K562 (cell line): ENCODE measurements at regions of chr5 and their contacts with region 1.

Region 1: DNA sequence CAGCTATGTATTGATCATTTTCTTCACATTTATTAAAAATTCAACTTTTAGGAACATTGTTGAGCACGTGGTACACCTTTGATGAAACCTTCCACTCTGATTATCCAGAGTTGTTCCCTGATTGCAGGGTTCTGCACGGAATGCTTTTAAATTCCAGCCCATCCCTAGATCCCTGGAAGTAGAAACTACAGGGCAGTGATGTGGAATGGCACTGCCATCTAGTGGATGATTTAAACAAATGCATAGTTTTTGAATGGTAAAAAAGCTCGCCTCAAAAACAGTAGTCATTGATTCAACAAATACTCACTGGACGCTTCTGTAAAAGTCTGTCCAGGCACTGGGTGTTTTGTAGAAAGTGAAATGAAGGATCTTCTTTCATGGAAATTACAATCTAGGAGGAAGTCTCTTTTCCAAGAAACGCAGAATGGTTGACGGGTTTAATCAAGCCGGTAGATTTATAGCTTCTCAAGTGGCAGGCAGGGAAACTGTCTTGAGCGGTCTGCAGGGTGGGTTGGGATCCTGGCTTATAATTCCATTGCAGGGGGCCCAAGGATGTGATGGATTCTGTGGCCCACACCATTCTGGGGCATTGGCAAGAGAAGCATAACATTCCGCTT is 118.4 kb downstream of the ARHGAP26 start:
- DNase-seq: peak; percentile 43 to 52 (median 47)
- ATAC-seq: peak; percentile 81
- H3K4me3 ChIP-seq: no peak overlapping the region
- H3K27ac ChIP-seq: no peak overlapping the region
- H3K4me1 ChIP-seq: no peaks in the 10 kb centered on the region
- H3K27me3 ChIP-seq: peaks cover 3 to 4% of the 10 kb centered on the region in 2 experiments; a peak in 1 of 5 replicates
- CTCF ChIP-seq: peak; percentile 51 to 77 (median 73)
- EP300 ChIP-seq: no peak
- POLR2A ChIP-seq: no peak
- RAD21 ChIP-seq: peak; percentile 82 to 85

Region 2: GRCh38 chr5:141960449-141961202 is 928.0 kb before region 1 on chr5:
- CTCF ChIA-PET with region 1: no interaction called
- POLR2A ChIA-PET with region 1: no interaction called
- in situ Hi-C with region 1: no loop called
- intact Hi-C with region 1: no loop called
- DNase-seq: peak; percentile 83 to 95 (median 86)
- ATAC-seq: peak; percentile 94
- H3K4me3 ChIP-seq: no peak overlapping the region
- H3K27ac ChIP-seq: peak overlapping the region; percentile 55
- H3K4me1 ChIP-seq: peaks cover 3 to 16% of the 10 kb centered on the region in 2 experiments
- H3K27me3 ChIP-seq: peaks cover 3 to 21% of the 10 kb centered on the region in 2 experiments; a peak in 3 of 5 replicates
- CTCF ChIP-seq: peak; percentile 90 to 95 (median 94)
- EP300 ChIP-seq: no peak
- POLR2A ChIP-seq: no peak
- RAD21 ChIP-seq: peak; percentile 86 to 91

Region 3: GRCh38 chr5:142151436-142152383 is 736.9 kb before region 1 on chr5:
- CTCF ChIA-PET with region 1: no interaction called
- POLR2A ChIA-PET with region 1: no interaction called
- in situ Hi-C with region 1: no loop called
- intact Hi-C with region 1: loop called (anchors 10 kb)
- DNase-seq: peak; percentile 50 to 76 (median 60)
- ATAC-seq: peak; percentile 85
- H3K4me3 ChIP-seq: no peak overlapping the region
- H3K27ac ChIP-seq: no peak overlapping the region
- H3K4me1 ChIP-seq: no peaks in the 10 kb centered on the region
- H3K27me3 ChIP-seq: no peaks in the 10 kb centered on the region
- CTCF ChIP-seq: peak; percentile 63 to 93 (median 66); a peak in 5 of 6 replicates
- EP300 ChIP-seq: no peak
- POLR2A ChIP-seq: no peak
- RAD21 ChIP-seq: peak; percentile 92 to 93

Region 4: DNA sequence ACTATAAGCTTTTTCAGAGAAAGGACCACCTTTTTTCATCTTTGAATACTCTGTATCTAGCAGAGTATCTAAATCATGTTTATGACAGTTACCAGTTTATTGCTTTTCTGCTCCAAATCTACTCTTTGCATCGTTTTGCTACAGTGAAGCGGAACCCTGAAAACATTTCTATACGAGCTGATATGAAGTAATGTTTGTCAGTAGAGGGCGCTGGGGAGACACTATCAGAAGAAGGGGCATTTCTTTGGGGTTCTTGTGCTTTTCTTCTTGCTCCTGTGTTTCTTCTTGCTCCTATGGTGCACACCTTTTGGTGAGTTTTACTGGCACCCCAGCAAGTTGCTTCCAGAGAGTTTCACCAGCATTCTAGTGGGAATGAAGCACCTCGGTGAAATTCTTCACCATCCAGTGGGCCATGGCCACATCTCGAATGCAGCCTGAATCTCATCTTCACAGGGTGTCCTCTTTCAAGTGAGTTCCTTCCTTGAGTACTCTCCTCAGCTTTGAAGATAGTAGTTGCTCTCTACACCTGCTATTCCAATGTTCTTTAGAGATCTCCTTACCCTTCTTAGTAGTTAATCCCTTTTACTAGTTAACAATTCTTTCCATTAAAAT is 301.1 kb before region 1 on chr5:
- CTCF ChIA-PET with region 1: no interaction called
- POLR2A ChIA-PET with region 1: no interaction called
- in situ Hi-C with region 1: no loop called
- intact Hi-C with region 1: loop called (anchors 10 kb)
- DNase-seq: peak; percentile 22 to 68 (median 30)
- ATAC-seq: peak; percentile 70
- H3K4me3 ChIP-seq: no peak overlapping the region
- H3K27ac ChIP-seq: no peak overlapping the region
- H3K4me1 ChIP-seq: no peaks in the 10 kb centered on the region
- H3K27me3 ChIP-seq: peaks cover 0 to 10% of the 10 kb centered on the region in 2 experiments; a peak in 1 of 5 replicates
- CTCF ChIP-seq: peak; percentile 63 to 72 (median 67)
- EP300 ChIP-seq: no peak
- POLR2A ChIP-seq: no peak
- RAD21 ChIP-seq: peak; percentile 51 to 62; a peak in 3 of 4 replicates

Region 5: DNA sequence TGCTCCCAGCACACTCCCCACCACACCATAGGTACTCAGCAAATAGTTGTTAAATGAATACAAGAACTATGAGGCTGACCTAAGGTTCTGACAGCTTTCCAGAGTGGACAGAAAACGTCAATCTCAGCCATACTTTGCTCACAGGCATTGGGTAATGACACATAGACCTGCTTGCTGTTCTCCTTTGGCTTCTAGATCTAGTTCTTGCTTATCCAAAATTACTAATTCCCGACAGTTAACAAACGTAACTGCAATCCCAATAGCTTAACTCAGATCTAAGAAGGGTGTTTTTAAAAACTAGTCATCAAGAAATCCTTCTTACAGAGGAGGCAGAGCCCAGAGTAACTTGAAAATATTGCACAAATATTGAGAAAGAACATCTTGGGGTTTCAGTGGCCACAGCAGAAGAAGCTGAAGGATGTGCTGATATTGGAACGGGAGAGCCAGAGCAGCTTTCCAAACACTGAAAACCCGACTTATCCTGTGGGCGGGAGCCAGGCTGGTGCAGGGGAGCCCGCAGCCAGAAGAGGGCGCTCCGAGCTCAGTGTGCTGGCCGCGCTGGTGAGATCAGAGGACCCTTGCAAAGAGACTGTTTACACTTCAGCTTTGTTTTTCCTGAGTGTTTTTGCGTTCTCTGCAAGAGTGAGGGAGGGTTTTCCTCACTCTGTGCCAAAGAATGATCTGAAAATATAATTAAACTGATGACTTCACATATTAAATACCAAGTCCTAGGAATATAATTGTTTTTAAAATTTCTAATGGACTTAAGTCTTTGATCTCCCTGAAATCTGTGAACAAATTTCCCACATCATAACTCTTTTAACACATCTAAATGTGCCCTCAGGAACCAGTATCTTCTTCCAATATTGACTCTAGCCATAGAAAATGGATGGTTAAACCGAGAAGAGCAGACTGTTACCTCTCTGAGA is 233.0 kb before region 1 on chr5:
- CTCF ChIA-PET with region 1: no interaction called
- POLR2A ChIA-PET with region 1: no interaction called
- in situ Hi-C with region 1: no loop called
- intact Hi-C with region 1: loop called (anchors 1 kb)
- DNase-seq: peak; percentile 74 to 85 (median 82)
- ATAC-seq: peak; percentile 99
- H3K4me3 ChIP-seq: no peak overlapping the region
- H3K27ac ChIP-seq: no peak overlapping the region
- H3K4me1 ChIP-seq: no peaks in the 10 kb centered on the region
- H3K27me3 ChIP-seq: peaks cover 14 to 48% of the 10 kb centered on the region in 2 experiments; a peak in 4 of 5 replicates
- CTCF ChIP-seq: peak; percentile 93 to 95 (median 94)
- EP300 ChIP-seq: no peak
- POLR2A ChIP-seq: no peak
- RAD21 ChIP-seq: peak; percentile 90 to 91

Region 6: GRCh38 chr5:142713121-142713706 is 175.4 kb before region 1 on chr5:
- CTCF ChIA-PET with region 1: interaction called, 12 read pairs
- POLR2A ChIA-PET with region 1: interaction called, 5 read pairs
- in situ Hi-C with region 1: no loop called
- intact Hi-C with region 1: loop called (anchors 2 kb)
- DNase-seq: peak; percentile 78 to 87 (median 86)
- ATAC-seq: peak; percentile 99
- H3K4me3 ChIP-seq: peak overlapping the region; percentile 48
- H3K27ac ChIP-seq: no peak overlapping the region; the same call in 2 of the 3 replicates
- H3K4me1 ChIP-seq: peaks cover 0 to 4% of the 10 kb centered on the region in 2 experiments; a peak in 2 of 5 replicates
- H3K27me3 ChIP-seq: peaks cover 3 to 10% of the 10 kb centered on the region in 2 experiments; a peak in 3 of 5 replicates
- CTCF ChIP-seq: peak; percentile 80 to 95 (median 94)
- EP300 ChIP-seq: no peak
- POLR2A ChIP-seq: no peak
- RAD21 ChIP-seq: peak; percentile 67 to 70

Region 7: DNA sequence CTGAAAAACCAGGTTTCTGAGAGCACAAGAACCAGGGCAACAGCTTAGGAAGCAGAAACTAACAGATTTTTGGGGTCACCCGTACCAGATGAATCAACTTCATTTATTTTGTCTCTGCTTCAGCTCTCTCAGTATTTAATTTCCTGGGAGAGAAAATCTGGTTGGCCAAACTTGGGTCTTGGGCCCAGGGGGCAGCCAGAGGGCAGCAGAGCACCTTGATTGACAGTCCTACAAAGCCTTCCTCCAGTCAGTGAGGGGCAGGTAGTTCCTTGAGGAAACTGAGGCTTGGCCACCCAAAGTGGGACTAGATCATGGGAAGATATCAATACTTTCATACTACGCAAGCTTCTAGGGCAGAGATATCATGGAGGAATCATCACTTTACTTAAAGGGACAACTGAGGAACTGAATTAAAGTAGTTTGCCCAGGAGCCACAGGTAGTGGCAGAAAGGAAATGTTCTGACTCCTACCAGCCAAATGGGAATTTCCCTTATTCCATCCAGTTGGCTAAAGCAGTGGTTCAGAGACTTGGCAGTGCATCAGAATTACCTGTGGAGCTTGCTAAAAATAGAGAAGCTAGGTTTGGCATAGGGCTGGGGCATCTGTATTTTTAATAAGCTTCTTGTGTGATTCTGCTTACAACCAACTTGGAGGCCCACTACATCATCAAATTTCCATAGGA is 139.9 kb before region 1 on chr5:
- CTCF ChIA-PET with region 1: interaction called, 11 read pairs
- POLR2A ChIA-PET with region 1: no interaction called
- in situ Hi-C with region 1: no loop called
- intact Hi-C with region 1: no loop called
- DNase-seq: peak in 3 of 4 experiments; percentile 23 to 29 (median 23)
- ATAC-seq: peak; percentile 63; the same call in 2 of the 3 replicates
- H3K4me3 ChIP-seq: no peak overlapping the region
- H3K27ac ChIP-seq: no peak overlapping the region
- H3K4me1 ChIP-seq: no peaks in the 10 kb centered on the region
- H3K27me3 ChIP-seq: no peaks in the 10 kb centered on the region
- CTCF ChIP-seq: peak; percentile 66 to 81 (median 66)
- EP300 ChIP-seq: no peak
- POLR2A ChIP-seq: no peak
- RAD21 ChIP-seq: peak; percentile 92 to 96

Region 8: GRCh38 chr5:142969624-142970439 is 81.3 kb after region 1 on chr5:
- CTCF ChIA-PET with region 1: no interaction called
- POLR2A ChIA-PET with region 1: no interaction called
- in situ Hi-C with region 1: no loop called
- intact Hi-C with region 1: no loop called
- DNase-seq: no peak
- ATAC-seq: no peak
- H3K4me3 ChIP-seq: no peak overlapping the region
- H3K27ac ChIP-seq: no peak overlapping the region
- H3K4me1 ChIP-seq: no peaks in the 10 kb centered on the region
- H3K27me3 ChIP-seq: peaks cover under 1 to 6% of the 10 kb centered on the region in 2 experiments; a peak in 2 of 5 replicates
- CTCF ChIP-seq: no peak
- EP300 ChIP-seq: no peak
- POLR2A ChIP-seq: no peak
- RAD21 ChIP-seq: no peak